Activated B cell treated with CpG ODN at 0.5 μM for 24 hours (primary cell): ENCODE measurements at regions of chr3 and their contacts with region 1.

Region 1: DNA sequence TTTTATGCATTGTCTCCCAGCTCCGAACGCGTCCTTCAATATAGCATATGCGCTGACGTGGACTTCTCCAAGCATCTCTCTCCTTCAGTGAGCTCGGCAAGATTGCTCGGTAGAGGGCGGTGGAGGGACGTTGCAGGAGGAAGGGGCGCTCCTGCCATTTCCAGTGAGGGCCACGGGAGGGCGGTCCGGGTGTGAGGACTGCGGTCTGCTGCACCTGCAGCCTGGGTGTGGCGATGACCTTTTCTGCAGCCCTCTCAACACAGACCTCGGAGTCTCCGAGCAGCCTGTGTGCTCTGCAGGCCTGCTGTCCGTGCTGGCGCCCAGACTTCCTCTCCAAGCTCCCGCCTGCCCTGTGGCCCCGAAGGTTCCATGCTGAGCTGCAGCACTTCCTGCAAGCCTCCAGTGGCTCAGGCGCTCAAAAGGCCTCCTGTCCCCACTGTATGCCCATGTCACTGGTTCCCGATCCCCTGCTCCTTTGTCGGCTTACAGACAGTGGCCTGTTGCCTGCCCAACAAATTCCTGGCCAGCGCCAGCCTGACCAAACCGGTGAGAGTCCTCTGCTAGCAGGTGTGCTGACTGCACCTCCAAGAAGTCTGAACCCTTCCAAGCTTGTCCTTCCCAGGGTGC is 8.9 kb upstream of the RTP3 start:
- DNase-seq: peak; percentile 85
- ATAC-seq: peak; percentile 99
- H3K4me3 Mint-ChIP-seq: peak overlapping the region; percentile 29
- H3K27ac Mint-ChIP-seq: no peak overlapping the region
- H3K4me1 Mint-ChIP-seq: peaks cover 12% of the 10 kb centered on the region
- H3K27me3 Mint-ChIP-seq: peaks cover 2% of the 10 kb centered on the region
- CTCF ChIP-seq: peak; percentile 88

Region 2: GRCh38 chr3:46549408-46549904 is 60.6 kb after region 1 on chr3:
- CTCF ChIA-PET with region 1: interaction called, 51 read pairs
- POLR2A ChIA-PET with region 1: no interaction called
- intact Hi-C with region 1: no loop called
- DNase-seq: no peak
- ATAC-seq: no peak
- H3K4me3 Mint-ChIP-seq: no peak overlapping the region
- H3K27ac Mint-ChIP-seq: no peak overlapping the region
- H3K4me1 Mint-ChIP-seq: peaks cover 35% of the 10 kb centered on the region
- H3K27me3 Mint-ChIP-seq: peaks cover 3% of the 10 kb centered on the region
- CTCF ChIP-seq: no peak

Region 3: DNA sequence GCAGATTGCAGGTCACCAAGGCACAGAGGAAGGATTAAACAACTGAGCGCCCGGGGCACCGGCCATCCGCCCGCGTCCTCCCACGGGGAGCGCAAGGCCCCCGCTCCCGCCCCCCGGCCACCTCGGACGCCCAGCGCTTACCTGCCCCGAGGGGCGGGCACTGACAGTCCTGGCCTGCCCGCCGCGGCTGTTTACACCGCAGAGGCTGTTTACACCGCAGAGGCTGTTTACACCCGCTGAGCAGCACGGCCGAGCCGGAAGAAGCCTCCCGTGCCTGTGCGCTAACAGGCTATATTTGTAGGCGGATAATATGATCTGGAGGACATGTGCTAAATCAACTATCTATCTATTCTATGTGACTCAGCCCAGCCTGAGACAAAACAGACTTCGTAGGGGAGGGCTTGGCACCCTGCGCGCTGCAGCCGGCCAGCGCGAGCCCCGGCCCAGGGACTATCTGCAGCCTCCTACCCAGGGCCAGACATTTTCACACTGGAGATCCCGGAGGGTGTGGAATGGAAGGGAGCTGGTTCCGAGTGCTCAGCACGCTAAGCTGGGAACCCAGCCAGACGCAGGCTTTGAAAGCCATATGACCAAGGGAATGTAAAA is 77.3 kb after region 1 on chr3 and contains the start of gene LRRC2:
- CTCF ChIA-PET with region 1: interaction called, 229 read pairs
- POLR2A ChIA-PET with region 1: interaction called, 3 read pairs
- intact Hi-C with region 1: no loop called
- DNase-seq: no peak
- ATAC-seq: peak; percentile 45
- H3K4me3 Mint-ChIP-seq: peak within 1 kb of the TSS; percentile 64
- H3K27ac Mint-ChIP-seq: no peak within 1 kb of the TSS
- H3K4me1 Mint-ChIP-seq: peaks cover 11% of the 10 kb centered on the region
- H3K27me3 Mint-ChIP-seq: peaks cover 27% of the 10 kb centered on the region
- CTCF ChIP-seq: no peak
- total RNA-seq, gene LRRC2: not detected in 2 replicates

Region 4: DNA sequence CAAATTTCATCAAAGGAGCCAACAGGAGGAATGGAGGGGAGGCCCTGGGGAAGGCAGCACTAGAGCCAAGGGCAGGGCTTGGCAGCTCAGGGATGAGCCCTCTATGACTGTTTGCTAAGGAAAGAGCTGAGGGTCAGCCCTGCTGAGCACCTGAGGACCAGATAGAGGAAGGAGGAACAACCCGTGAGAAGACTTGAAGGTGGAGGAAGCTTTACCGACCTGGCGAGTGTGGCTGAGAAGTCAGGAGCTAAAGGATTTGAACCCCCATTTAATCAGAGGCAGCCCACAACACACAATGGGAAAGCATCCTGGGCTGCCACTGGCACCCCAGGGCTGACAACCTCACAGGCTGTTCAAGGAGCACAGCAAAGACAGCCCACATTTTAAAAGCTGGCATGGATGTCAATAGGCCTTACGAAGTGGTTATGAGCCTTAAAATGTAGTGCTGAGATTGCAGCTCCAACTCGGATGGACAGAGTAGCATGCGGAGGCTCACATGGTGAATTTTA is 97.9 kb after region 1 on chr3:
- CTCF ChIA-PET with region 1: no interaction called
- POLR2A ChIA-PET with region 1: no interaction called
- intact Hi-C with region 1: no loop called
- DNase-seq: no peak
- ATAC-seq: no peak
- H3K4me3 Mint-ChIP-seq: no peak overlapping the region
- H3K27ac Mint-ChIP-seq: no peak overlapping the region
- H3K4me1 Mint-ChIP-seq: no peaks in the 10 kb centered on the region
- H3K27me3 Mint-ChIP-seq: peaks cover 6% of the 10 kb centered on the region
- CTCF ChIP-seq: no peak

Region 5: GRCh38 chr3:46695177-46695961 is 206.5 kb after region 1 on chr3:
- CTCF ChIA-PET with region 1: interaction called, 3 read pairs
- POLR2A ChIA-PET with region 1: no interaction called
- intact Hi-C with region 1: loop called (anchors 2 kb)
- DNase-seq: no peak
- ATAC-seq: peak; percentile 19
- H3K4me3 Mint-ChIP-seq: peak overlapping the region; percentile 50
- H3K27ac Mint-ChIP-seq: peak overlapping the region; percentile 50
- H3K4me1 Mint-ChIP-seq: peaks cover 32% of the 10 kb centered on the region
- H3K27me3 Mint-ChIP-seq: peaks cover 15% of the 10 kb centered on the region
- CTCF ChIP-seq: no peak

Region 6: DNA sequence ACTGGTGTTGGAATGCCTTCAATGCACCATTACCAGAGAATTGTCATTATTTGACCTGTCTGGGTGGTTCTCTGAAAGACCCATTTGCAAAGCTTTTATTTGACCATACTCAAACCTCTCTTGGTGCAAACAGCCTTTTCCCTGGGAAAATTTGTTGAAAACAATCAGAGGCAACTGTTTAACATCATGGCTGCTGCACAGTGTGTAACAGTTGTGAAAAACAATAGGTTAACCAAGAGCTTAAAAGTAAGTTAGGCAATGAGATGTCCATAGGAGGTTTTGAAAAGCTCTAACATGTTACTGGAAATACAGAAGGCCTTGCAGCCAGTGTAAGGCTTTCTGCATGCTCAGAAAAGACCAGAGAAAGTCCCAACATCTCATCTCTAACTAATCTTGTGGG is 1825.7 kb after region 1 on chr3:
- CTCF ChIA-PET with region 1: no interaction called
- POLR2A ChIA-PET with region 1: no interaction called
- intact Hi-C with region 1: no loop called
- DNase-seq: no peak
- ATAC-seq: no peak
- H3K4me3 Mint-ChIP-seq: no peak overlapping the region
- H3K27ac Mint-ChIP-seq: no peak overlapping the region
- H3K4me1 Mint-ChIP-seq: no peaks in the 10 kb centered on the region
- H3K27me3 Mint-ChIP-seq: peaks cover 6% of the 10 kb centered on the region
- CTCF ChIP-seq: no peak